ENCODE measurements at regions of chr10 and their contacts with region 1.

Region 1: DNA sequence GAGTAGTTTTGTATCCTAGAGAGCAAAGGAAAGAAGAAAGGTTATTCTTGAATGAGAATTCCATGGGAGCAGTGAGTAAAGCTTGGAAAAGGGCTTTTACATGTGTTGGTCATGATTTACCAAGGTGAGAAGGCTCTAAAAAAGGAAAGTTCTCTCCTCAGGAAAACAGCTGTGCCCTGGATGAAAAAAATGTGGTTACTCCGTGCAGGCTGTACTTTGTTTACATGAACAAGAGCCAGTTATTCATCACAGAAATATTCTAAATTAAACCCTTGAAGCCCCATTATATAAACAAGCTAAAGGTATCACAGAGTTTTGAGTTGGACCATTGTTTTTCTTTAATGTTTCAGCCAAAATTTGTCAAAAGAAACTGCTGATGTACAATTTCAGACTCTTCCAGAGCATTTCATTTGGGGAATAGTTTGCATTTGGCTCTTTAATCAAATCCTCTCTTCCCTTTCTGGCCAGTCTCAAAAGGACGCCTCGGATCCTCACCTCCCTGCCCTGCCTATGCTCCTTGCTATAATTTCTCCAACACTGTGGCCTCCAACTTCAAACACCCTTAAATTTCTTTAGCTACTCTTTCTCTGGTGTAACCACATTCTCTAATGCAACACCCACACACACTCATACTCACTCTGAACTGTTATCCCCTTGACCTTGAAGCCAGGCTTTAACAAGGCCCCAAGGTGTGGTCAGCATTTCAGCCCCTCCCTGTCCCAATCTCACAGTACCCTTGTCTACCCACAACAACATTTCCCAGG is 47.4 kb downstream of the AFAP1L2 start:
- DNase-seq: peak; percentile 72
- H3K4me3 ChIP-seq: no peak overlapping the region
- H3K27ac ChIP-seq: no peak overlapping the region
- H3K4me1 ChIP-seq: peaks cover 18% of the 10 kb centered on the region
- H3K27me3 ChIP-seq: no peaks in the 10 kb centered on the region
- CTCF ChIP-seq: no peak

Region 2: GRCh38 chr10:114397651-114398145 is 40.8 kb after region 1 on chr10:
- CTCF ChIA-PET with region 1: no interaction called
- dilution Hi-C with region 1: no loop called
- in situ Hi-C with region 1: no loop called
- intact Hi-C with region 1: loop called (anchors 5 kb)
- DNase-seq: peak; percentile 83
- H3K4me3 ChIP-seq: peak overlapping the region; percentile 5 to 9 (median 9)
- H3K27ac ChIP-seq: peak overlapping the region; percentile 49
- H3K4me1 ChIP-seq: peaks cover 86% of the 10 kb centered on the region
- H3K27me3 ChIP-seq: no peaks in the 10 kb centered on the region
- CTCF ChIP-seq: peak; percentile 9 to 22

Region 3: DNA sequence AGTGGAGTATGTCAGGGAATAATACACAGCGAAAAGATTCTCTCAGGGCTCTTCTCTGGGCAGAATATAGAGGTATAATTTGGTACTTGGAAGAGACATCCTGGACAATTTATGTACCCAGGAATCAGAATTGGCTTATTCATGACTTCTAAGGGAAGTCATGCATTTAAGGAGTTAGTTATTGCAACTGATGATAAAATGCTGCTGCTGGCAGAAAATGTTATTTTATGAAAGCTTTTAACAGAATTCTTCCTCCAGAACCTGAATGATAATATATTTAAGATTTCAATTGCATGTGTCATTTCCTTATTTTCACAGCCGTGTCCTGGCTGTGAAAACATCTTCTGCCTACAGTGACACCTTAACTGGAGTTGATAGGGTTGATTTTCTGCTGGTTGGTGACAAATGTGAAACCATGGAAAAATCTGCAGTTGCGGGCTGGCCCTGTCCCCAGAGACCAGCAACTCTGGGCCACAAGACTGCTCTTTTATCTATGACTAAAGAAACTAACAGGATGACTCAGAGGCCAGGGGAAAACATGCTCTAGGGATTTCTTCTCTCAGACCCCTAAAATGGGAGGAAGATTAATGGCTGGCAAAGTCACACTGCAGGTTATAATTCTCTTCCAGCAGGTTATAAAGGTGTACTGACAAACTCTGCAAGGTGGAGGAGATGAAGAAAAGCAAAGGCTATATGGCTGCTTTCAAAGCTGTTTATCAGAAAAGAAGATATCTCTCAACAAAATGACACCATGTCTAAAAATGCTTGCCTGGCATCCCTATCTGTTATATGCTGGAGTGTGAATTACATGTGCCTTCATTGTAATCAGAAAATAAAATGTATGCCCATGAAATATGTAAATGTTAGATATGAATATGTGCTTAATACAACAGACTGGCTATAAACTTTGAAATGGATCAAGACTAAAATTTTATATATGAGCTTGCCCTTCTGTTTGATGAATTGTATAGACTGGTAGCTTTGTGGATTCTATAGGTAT is 569.0 kb after region 1 on chr10:
- CTCF ChIA-PET with region 1: no interaction called
- dilution Hi-C with region 1: no loop called
- in situ Hi-C with region 1: no loop called
- intact Hi-C with region 1: no loop called
- DNase-seq: peak; percentile 31
- H3K4me3 ChIP-seq: no peak overlapping the region
- H3K27ac ChIP-seq: no peak overlapping the region
- H3K4me1 ChIP-seq: peaks cover 6% of the 10 kb centered on the region
- H3K27me3 ChIP-seq: no peaks in the 10 kb centered on the region
- CTCF ChIP-seq: no peak

Measured in mammary epithelial cell (primary cell).